Cardiac septum (tissue), 1 donor: ENCODE measurements at regions of chr2 and their contacts with region 1.

Region 1: GRCh38 chr2:120693121-120693520 is 42.5 kb upstream of the GLI2 start:
- DNase-seq: no peak

Region 2: DNA sequence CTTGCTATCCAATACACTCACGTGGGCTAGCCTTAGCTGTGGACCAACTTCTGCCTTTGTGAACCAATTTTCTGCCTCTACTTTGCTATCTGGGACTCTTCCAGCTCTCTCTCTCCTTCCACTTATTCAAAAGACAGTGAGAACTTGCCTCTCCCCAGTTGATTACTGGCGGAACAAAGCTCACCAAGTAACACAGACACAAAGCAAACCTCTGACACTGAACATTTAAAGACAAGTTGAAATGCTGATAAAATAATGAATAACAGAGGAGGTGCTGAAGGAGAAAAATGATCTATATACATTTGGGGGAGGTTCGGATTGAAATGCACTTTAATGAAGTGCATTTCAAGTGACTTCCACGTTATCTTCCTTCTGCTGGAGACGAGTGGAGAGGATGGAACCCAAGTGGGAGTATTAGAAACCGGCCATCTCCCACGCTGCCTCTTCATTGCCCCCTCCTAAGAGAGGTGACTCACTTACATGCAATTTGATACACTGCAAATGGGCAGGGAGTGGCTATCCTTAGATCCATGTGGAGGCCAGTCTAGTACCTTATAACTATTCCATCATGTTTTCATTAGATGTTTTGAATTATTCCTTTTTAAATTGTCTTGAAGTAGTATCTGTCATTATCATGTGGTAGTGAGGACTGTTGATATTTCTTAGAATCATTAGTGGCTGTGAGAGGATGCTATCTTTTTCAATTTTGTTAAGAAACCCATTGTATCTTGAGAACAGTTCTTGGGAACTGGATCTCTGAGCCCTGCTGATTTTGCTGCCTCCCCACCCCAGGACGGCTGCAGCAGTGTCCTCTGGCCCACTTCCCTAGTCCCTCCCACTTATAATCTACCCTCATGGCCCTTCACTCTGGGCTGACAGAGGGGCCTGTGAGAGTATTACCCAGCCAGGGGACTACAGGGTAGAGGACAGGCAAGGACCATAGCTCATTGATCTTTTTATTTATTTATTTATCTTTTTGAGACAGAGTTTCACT is 36.6 kb after region 1 on chr2:
- intact Hi-C with region 1: no loop called
- DNase-seq: no peak

Region 3: DNA sequence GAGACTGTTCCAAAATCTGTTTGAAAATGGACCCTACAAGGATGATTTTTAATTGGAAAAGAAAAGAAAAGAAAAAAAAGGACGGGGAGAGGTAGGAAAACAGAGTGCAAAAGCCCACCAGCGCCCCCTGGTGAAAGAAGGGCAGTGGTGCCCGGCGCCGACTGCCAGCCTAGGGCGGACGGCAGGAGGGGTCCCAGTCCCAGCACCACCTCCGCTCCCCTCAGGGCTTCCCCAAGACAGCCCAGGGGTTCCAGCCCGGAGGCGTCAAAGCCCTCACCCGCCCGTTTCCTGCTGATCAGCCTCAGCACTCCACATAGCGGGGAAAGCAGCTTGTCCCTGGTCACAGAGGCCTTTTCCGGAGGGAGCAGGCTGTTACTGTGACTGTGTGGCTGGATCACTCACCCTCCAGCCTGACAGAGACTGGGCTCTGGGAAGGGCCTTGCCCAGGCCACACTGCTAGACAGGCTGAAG is 377.9 kb after region 1 on chr2:
- intact Hi-C with region 1: loop called (anchors 1 kb)
- DNase-seq: peak; percentile 84

Region 4: DNA sequence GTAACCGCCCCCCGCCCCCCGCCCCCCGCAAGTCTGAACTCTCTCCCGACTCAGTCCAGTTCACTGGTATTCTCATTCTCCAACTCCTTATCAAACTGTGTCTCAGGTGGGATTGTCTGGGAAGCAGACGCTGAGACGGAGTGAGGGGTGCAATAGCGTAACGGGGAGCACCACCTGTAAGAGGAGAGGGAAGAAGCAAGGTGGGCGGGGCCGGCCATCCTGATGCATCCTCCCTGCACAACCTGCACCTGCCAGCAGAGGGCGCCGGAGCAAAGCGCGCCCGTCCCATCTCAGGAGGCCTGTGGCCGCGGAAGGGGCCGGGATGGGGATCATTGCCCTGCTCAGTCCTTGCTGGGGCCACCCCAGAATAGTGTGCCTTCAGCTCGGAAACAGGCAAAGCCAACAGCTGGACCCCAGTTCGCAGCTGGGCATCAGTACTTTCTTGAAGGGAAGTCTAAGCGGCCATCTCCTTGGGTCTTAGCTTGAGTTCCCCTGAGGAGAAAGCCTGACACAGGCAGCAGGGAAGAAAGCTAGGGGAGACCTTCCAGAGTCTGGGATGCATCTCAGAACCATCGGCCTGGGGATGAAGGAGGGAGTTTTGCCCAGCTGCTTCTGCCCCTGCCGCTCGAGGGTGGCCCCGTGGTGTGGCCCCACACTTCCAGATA is 383.9 kb after region 1 on chr2:
- intact Hi-C with region 1: loop called (anchors 2 kb)
- DNase-seq: peak; percentile 90